Left ventricle myocardium superior (tissue), 1 donor: ENCODE measurements at regions of chr3 and their contacts with region 1.

Region 1: GRCh38 chr3:131033480-131034080 is 6.9 kb downstream of the NEK11 start:
- DNase-seq: no peak
- ATAC-seq: no peak

Region 2: DNA sequence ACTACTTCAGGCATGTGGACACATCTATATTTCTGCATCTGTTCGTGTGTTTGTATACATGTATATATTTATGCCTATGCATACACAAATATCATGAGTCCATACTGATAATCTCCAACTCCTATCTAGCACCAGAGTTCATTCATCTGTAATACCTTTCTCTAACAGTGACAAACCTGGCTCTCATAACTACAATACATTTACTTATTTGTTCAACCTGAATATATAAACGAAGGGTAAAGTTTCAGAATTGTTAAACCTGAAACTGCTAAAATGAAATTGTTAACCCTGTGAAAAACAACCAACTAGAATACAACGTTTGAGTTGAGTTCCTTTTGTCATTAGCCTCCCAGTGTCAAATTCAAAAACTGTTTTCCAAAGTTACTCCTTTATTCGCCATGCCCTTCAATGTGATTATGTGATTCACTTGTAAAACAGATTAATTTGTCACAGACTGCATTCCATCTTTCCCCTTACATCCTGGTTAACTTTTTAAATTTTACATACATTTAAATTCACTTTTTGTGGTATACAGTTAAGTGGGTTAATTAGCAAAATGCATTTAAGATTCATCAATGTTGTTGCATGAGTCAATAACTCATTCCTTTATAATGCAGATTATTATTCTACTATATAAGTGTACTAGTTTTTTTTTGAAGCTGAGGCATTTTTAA is 345.4 kb before region 1 on chr3:
- intact Hi-C with region 1: no loop called
- DNase-seq: no peak
- ATAC-seq: no peak

Region 3: GRCh38 chr3:131561511-131561910 is 527.9 kb after region 1 on chr3:
- intact Hi-C with region 1: no loop called
- DNase-seq: no peak
- ATAC-seq: no peak

Region 4: DNA sequence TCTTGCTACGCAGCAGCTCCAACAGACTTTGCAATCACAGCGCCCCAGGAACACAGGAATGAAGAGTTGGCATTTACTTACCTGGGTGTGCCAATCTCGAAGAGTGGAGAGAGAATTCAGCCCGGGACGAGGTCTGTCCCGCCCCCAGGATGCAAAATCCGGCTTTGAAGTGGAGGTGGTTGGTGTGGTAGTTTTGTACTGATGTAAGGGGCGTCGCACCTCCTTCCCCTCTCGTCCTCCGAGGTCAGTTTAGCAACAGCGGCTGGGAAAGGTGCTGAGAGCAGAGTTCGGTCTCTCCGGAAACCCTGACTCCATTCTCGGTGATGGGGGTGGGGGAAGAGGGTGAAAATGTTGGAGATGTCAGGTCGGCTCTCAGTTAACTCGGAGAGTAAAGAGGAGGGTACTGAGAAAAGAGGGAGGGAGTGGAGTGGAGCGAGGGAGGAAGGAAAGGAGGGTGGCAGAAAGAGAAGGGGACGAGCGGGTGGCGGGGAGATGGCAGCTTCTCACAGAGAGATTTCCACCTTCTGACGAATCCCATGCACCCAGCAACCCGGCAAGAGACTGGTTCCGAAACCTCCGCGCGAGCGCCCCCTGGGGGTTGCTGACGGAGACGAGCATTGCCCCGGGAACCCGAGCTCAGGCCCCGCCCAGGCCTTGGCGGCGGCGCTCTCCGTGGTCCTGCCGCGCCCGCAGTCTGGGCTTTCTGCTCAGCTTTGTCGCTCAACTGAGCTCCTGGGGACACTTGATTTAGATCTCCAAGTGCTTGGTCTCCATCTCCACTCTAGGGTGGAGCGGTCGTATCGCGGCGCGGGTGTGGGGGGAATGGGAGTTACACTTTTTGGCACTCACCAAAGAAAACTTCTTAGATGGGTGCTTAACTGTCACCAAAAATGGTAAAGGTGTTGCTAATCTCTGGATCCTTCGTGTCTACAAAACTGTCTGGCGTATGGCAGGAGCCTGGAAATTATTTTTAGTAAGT is 1001.2 kb after region 1 on chr3 and contains the start of gene CPNE4:
- intact Hi-C with region 1: loop called (anchors 10 kb)
- DNase-seq: peak; percentile 85
- ATAC-seq: peak; percentile 97
- total RNA-seq, gene CPNE4: 34.5 TPM